GM12878 (cell line): ENCODE measurements at regions of chr6 and their contacts with region 1.

Region 1: DNA sequence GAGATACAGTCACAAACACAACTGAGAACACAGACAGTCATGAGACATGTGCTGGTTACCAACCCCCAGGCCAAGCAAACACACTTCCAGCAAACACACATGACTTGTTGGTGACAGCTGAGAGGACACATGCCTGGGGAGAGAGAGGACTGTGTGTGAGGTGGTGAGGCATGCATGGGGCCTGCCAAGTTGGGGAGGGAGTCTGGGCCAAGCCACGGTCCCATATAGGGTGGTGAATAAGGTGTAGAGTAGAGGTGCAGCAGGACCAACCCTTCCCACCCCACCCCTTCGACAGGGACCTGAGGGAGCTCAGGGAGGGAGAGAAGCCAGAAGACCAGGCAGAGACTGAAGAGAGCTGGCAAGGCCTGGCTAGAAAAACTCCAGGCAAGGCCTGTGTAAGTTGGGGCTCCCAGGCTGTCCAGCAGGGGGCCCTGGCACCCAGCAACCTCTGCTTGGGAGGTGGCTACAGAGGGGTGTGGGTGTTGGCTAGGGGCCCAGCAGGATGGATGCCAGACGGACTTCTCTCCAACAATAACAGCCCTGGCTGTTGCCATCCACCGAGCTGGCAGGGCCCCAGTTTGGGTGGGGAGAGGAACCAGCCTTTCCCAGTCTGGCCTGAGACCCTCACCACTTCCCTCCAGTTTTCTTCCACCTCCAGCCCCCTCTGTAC is 2.0 kb upstream of the SLC29A1 start:
- DNase-seq: no peak
- ATAC-seq: peak; percentile 68
- H3K4me3 ChIP-seq: no peak overlapping the region
- H3K27ac ChIP-seq: peak overlapping the region; percentile 15
- H3K4me1 ChIP-seq: peaks cover 45% of the 10 kb centered on the region
- H3K27me3 ChIP-seq: no peaks in the 10 kb centered on the region
- CTCF ChIP-seq: peak; percentile 84 to 97 (median 88); a peak in 5 of 6 replicates
- EP300 ChIP-seq: 0 out of 4 replicates have a peak, but pooled peaks of 1 of the 2 experiments have one; percentile 22
- POLR2A ChIP-seq: no peak; the same call in 1 of the 2 replicates
- RAD21 ChIP-seq: peak; percentile 65

Region 2: GRCh38 chr6:44010411-44011349 is 210.7 kb before region 1 on chr6:
- CTCF ChIA-PET with region 1: no interaction called
- POLR2A ChIA-PET with region 1: no interaction called
- RAD21 ChIA-PET with region 1: no interaction called
- SMC1A ChIA-PET with region 1: no interaction called
- in situ Hi-C with region 1: no loop called
- intact Hi-C with region 1: no loop called
- DNase-seq: no peak
- ATAC-seq: peak; percentile 18
- H3K4me3 ChIP-seq: no peak overlapping the region
- H3K27ac ChIP-seq: no peak overlapping the region
- H3K4me1 ChIP-seq: no peaks in the 10 kb centered on the region
- H3K27me3 ChIP-seq: no peaks in the 10 kb centered on the region; a peak in 2 of 4 replicates
- CTCF ChIP-seq: no peak
- EP300 ChIP-seq: no peak
- POLR2A ChIP-seq: no peak
- RAD21 ChIP-seq: no peak

Region 3: DNA sequence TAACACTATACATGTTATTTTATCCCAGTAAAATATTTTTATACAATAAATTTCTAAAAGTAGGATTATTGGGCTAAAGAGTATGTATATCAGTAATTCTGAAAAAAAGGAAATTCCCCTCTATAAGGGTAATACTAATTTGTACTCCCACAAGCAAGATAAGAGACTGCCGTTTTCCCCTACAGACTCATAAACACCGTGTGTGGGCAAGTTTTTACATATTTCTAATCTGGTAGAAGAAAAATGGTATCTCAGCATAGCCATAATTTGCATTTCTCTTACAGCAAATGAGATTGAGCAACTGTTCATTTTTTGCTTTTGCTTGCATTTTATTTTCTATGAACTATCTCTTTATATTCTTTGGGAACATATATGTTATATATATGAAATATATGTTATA is 30.7 kb before region 1 on chr6:
- CTCF ChIA-PET with region 1: interaction called, 4 read pairs
- POLR2A ChIA-PET with region 1: interaction called, 8 read pairs
- RAD21 ChIA-PET with region 1: interaction called, 7 read pairs
- SMC1A ChIA-PET with region 1: interaction called, 10 read pairs
- in situ Hi-C with region 1: no loop called
- intact Hi-C with region 1: no loop called
- DNase-seq: peak; percentile 27
- ATAC-seq: peak; percentile 87
- H3K4me3 ChIP-seq: no peak overlapping the region
- H3K27ac ChIP-seq: no peak overlapping the region
- H3K4me1 ChIP-seq: peaks cover 12% of the 10 kb centered on the region
- H3K27me3 ChIP-seq: no peaks in the 10 kb centered on the region
- CTCF ChIP-seq: no peak
- EP300 ChIP-seq: no peak
- POLR2A ChIP-seq: no peak
- RAD21 ChIP-seq: no peak

Region 4: GRCh38 chr6:44237813-44238433 is 16.5 kb after region 1 on chr6:
- CTCF ChIA-PET with region 1: interaction called, 95 read pairs
- POLR2A ChIA-PET with region 1: interaction called, 27 read pairs
- RAD21 ChIA-PET with region 1: interaction called, 21 read pairs
- SMC1A ChIA-PET with region 1: interaction called, 18 read pairs
- in situ Hi-C with region 1: no loop called
- intact Hi-C with region 1: no loop called
- DNase-seq: no peak
- ATAC-seq: peak; percentile 97
- H3K4me3 ChIP-seq: peak overlapping the region; percentile 54; the same call in 1 of the 2 replicates
- H3K27ac ChIP-seq: peak overlapping the region; percentile 71
- H3K4me1 ChIP-seq: peaks cover 8% of the 10 kb centered on the region
- H3K27me3 ChIP-seq: no peaks in the 10 kb centered on the region
- CTCF ChIP-seq: peak; percentile 91 to 95 (median 94)
- EP300 ChIP-seq: no peak
- POLR2A ChIP-seq: peak; percentile 83
- RAD21 ChIP-seq: peak; percentile 53

Region 5: GRCh38 chr6:44246663-44247337 is 25.4 kb after region 1 on chr6 and contains the start of gene HSP90AB1:
- CTCF ChIA-PET with region 1: interaction called, 37 read pairs
- POLR2A ChIA-PET with region 1: interaction called, 63 read pairs
- RAD21 ChIA-PET with region 1: interaction called, 15 read pairs
- SMC1A ChIA-PET with region 1: interaction called, 10 read pairs
- in situ Hi-C with region 1: no loop called
- intact Hi-C with region 1: loop called (anchors 1 kb)
- DNase-seq: peak; percentile 96
- ATAC-seq: peak; percentile 84
- H3K4me3 ChIP-seq: peak within 1 kb of the TSS; percentile 95
- H3K27ac ChIP-seq: peak within 1 kb of the TSS; percentile 96
- H3K4me1 ChIP-seq: peaks cover 7% of the 10 kb centered on the region; the same call in 1 of the 2 replicates
- H3K27me3 ChIP-seq: no peaks in the 10 kb centered on the region
- CTCF ChIP-seq: no peak
- EP300 ChIP-seq: peak; percentile 24 to 57; a peak in 1 of 4 replicates
- POLR2A ChIP-seq: peak; percentile 99
- RAD21 ChIP-seq: no peak
- polyA plus RNA-seq, gene HSP90AB1: 1,089 to 1,682 TPM

Region 6: DNA sequence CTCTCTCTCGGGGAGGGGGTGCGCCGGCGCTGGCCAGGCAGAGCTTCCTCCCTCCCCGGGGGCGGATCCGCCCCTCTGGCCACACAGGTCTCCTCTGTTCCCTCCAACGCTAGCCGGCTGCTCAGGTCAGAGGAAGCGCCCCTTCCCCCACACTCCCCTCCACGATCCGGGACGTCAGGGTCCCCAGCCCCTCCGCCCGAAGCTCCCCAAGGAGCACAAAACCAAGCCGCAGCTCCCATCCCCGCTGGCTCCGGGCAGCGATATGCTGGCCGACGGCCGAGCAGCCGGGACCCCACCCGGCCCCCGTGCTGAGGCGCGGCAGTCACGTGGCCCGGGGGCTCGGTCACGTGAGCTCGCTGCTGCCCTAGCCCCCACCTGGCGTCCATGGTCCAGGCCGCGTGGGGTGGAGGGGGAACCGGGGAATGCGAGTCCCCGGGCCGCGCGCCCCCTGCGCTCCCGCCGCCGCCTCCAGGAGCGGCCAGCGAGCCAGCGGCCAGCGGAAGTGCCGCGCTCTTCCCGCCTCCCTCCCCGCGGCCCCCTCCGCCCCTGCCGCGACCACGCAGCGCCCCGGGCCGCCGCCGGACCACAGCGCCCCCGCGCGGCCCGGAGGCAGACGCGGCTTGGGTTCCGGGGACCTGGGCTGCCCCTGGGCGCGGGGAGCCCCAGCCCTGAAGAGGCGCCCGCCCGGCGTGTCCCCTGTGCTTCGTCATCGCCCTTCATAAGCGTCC is 35.8 kb after region 1 on chr6 and contains the start of gene SLC35B2:
- CTCF ChIA-PET with region 1: interaction called, 12 read pairs
- POLR2A ChIA-PET with region 1: interaction called, 9 read pairs
- RAD21 ChIA-PET with region 1: interaction called, 6 read pairs
- SMC1A ChIA-PET with region 1: interaction called, 7 read pairs
- in situ Hi-C with region 1: no loop called
- intact Hi-C with region 1: no loop called
- DNase-seq: no peak
- ATAC-seq: peak; percentile 54
- H3K4me3 ChIP-seq: peak within 1 kb of the TSS; percentile 77
- H3K27ac ChIP-seq: peak within 1 kb of the TSS; percentile 99
- H3K4me1 ChIP-seq: peaks cover 61% of the 10 kb centered on the region
- H3K27me3 ChIP-seq: no peaks in the 10 kb centered on the region
- CTCF ChIP-seq: peak; percentile 53 to 69 (median 54); a peak in 5 of 6 replicates
- EP300 ChIP-seq: no peak
- POLR2A ChIP-seq: no peak
- RAD21 ChIP-seq: peak; percentile 49
- polyA plus RNA-seq, gene SLC35B2: 11.3 to 14.9 TPM